Ascending aorta (tissue), 2 donors: ENCODE measurements at regions of chr4 and their contacts with region 1.

Region 1: GRCh38 chr4:82373816-82374625 is at the start of gene HNRNPD:
- DNase-seq: peak; percentile 95 to 99
- H3K4me3 ChIP-seq: peak within 1 kb of the TSS; percentile 89 to 99
- H3K27ac ChIP-seq: peak within 1 kb of the TSS; percentile 99
- H3K4me1 ChIP-seq: peaks cover 7 to 18% of the 10 kb centered on the region in 2 donors
- H3K27me3 ChIP-seq: no peaks in the 10 kb centered on the region
- CTCF ChIP-seq: no peak
- total RNA-seq, gene HNRNPD: 102 TPM

Region 2: DNA sequence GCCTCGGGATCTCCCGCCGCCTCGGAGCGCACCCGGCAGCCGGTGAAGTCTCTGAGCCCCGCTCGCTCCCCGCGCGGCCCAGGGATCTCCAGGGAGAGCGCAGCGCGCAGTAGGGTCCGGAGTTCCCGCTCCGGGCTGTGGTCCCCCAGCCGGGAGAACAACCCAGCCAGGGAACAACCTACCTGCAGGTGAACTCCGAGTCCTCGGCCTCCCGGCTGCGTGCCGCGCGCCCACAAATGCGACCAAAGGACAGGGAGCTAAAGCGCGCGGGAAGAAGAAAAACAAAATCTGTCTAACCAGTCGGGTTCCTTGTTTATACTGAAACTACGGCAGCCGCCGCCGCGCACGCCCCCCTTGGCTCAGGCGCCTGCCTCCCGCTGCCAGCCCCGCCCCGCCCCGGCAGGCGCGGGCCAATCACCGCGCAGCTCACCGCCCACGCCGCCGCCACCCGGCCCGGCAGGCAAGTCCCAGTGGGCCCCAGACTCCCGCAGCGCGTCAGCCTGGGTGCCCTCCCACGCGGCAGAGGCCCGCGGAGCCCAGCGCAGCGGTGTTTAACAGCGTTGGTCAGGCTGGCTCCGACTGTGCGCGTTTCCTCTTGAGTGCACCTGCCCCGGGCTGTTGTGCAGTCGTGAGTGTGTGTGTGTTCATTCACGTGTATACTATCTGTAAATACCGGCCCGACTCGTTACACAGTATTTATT is 902.3 kb before region 1 on chr4 and contains the start of gene RASGEF1B:
- intact Hi-C with region 1: loop called (anchors 5 kb)
- DNase-seq: peak; percentile 78 to 95
- H3K4me3 ChIP-seq: peak within 1 kb of the TSS; percentile 76 to 94
- H3K27ac ChIP-seq: peak within 1 kb of the TSS; percentile 84 to 92
- H3K4me1 ChIP-seq: peaks cover 0 to 10% of the 10 kb centered on the region in 2 donors
- H3K27me3 ChIP-seq: no peaks in the 10 kb centered on the region
- CTCF ChIP-seq: peak in 1 of 3 experiments; percentile 24
- total RNA-seq, gene RASGEF1B: 8.4 TPM

Region 3: GRCh38 chr4:82890901-82891706 is 517.1 kb after region 1 on chr4 and contains the start of gene SEC31A:
- intact Hi-C with region 1: loop called (anchors 2 kb)
- DNase-seq: peak; percentile 75 to 97
- H3K4me3 ChIP-seq: peak within 1 kb of the TSS; percentile 87 to 91
- H3K27ac ChIP-seq: peak within 1 kb of the TSS; percentile 98 to 99
- H3K4me1 ChIP-seq: peaks cover 8 to 11% of the 10 kb centered on the region in 2 donors
- H3K27me3 ChIP-seq: no peaks in the 10 kb centered on the region
- CTCF ChIP-seq: peak in 1 of 3 experiments; percentile 20
- total RNA-seq, gene SEC31A: 100 TPM

Region 4: GRCh38 chr4:83034630-83035494 is 660.8 kb after region 1 on chr4 and contains the start of gene COPS4:
- intact Hi-C with region 1: loop called (anchors 1 kb)
- DNase-seq: peak; percentile 95 to 99
- H3K4me3 ChIP-seq: peak within 1 kb of the TSS; percentile 76 to 79
- H3K27ac ChIP-seq: peak within 1 kb of the TSS; percentile 92 to 94
- H3K4me1 ChIP-seq: peaks cover 0 to 16% of the 10 kb centered on the region in 2 donors
- H3K27me3 ChIP-seq: no peaks in the 10 kb centered on the region
- CTCF ChIP-seq: peak; percentile 15 to 59 (median 43)
- total RNA-seq, gene COPS4: 83.5 TPM

Region 5: GRCh38 chr4:83484500-83485461 is 1110.8 kb after region 1 on chr4 and contains the start of gene ABRAXAS1:
- intact Hi-C with region 1: loop called (anchors 10 kb)
- DNase-seq: peak; percentile 80 to 97
- H3K4me3 ChIP-seq: peak within 1 kb of the TSS; percentile 71 to 89
- H3K27ac ChIP-seq: peak within 1 kb of the TSS; percentile 81 to 96
- H3K4me1 ChIP-seq: peaks cover 0 to 12% of the 10 kb centered on the region in 2 donors
- H3K27me3 ChIP-seq: no peaks in the 10 kb centered on the region
- CTCF ChIP-seq: no peak
- total RNA-seq, gene ABRAXAS1: 13.7 TPM